ENCODE measurements at regions of chr1 and their contacts with region 1.

Region 1: DNA sequence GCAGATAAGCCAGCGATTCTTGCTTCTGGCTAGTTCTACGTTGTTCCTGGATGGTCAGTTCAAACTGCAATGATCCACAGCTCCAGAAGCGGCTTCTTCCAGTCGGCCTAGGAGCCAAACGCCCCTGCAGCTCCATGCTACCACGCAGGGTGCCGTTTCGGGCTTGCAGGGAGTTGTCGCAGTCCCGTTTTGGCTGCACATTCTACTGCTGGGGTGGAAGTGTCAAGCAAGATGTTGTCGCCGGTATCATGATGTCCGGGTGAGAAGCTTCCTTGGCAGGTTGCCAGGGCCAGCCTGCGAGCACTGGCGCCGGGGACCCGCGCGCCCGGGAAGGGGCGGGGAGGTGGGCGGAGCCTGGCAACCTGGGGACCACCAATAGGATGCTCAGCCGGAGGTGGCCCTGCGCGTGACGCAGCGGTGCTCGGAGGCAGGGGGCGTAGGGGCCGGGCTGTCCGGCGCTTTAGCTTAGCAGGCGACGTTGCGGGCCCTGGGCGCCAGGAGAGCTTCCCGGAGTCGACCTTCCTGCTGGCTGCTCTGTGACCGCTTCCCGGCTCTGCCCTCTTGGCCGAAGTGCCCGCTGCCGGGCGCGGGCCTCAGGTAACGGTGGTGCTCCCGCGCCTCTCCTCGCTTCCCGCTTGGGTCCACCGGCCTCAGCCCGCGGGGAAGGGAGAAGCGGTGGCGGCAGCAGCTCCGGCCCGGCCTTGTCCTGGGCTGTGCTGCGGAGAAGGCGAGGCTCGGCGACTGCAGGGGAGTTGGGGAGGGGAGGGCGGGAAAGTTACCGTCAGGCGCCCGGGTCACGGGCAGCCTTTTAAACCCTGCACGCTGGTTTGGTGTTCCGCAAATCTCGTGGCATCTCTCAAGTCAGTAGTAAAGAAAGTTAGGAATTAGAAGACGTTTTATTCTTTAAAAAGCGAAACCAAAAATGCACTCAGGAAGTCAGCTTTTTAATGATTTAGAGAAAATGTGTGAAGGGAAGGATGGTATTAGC is at the start of gene SOAT1:
- DNase-seq: peak; percentile 95
- H3K4me3 ChIP-seq: peak within 1 kb of the TSS; percentile 66 to 84 (median 71)
- H3K27ac ChIP-seq: peak within 1 kb of the TSS; percentile 92 to 94 (median 93)
- H3K4me1 ChIP-seq: peaks cover 8 to 46% (median 27%) of the 10 kb centered on the region in 4 donors
- H3K27me3 ChIP-seq: no peaks in the 10 kb centered on the region
- CTCF ChIP-seq: peak in 3 of 5 experiments; percentile 11 to 42 (median 36)
- EP300 ChIP-seq: no peak
- POLR2A ChIP-seq: peak; percentile 92
- total RNA-seq, gene SOAT1: 4.0 to 13.9 (median 10.3) TPM

Region 2: GRCh38 chr1:179217943-179218507 is 75.6 kb before region 1 on chr1:
- in situ Hi-C with region 1: no loop called
- intact Hi-C with region 1: no loop called
- DNase-seq: no peak
- H3K4me3 ChIP-seq: no peak overlapping the region
- H3K27ac ChIP-seq: peak overlapping the region; percentile 22 to 59 (median 48)
- H3K4me1 ChIP-seq: peaks cover 0 to 4% (median 2%) of the 10 kb centered on the region in 4 donors
- H3K27me3 ChIP-seq: no peaks in the 10 kb centered on the region
- CTCF ChIP-seq: no peak
- EP300 ChIP-seq: no peak
- POLR2A ChIP-seq: no peak

Region 3: GRCh38 chr1:179229214-179230140 is 64.2 kb before region 1 on chr1 and contains the start of gene ABL2:
- in situ Hi-C with region 1: no loop called
- intact Hi-C with region 1: loop called (anchors 2 kb)
- DNase-seq: peak; percentile 47
- H3K4me3 ChIP-seq: peak within 1 kb of the TSS; percentile 58 to 99 (median 79)
- H3K27ac ChIP-seq: peak within 1 kb of the TSS; percentile 79 to 95 (median 86)
- H3K4me1 ChIP-seq: peaks cover 6 to 43% (median 17%) of the 10 kb centered on the region in 4 donors
- H3K27me3 ChIP-seq: no peaks in the 10 kb centered on the region
- CTCF ChIP-seq: no peak
- EP300 ChIP-seq: no peak
- POLR2A ChIP-seq: no peak
- total RNA-seq, gene ABL2: 9.6 to 51.7 (median 14.3) TPM

Region 4: GRCh38 chr1:179241523-179242097 is 52.0 kb before region 1 on chr1:
- in situ Hi-C with region 1: no loop called
- intact Hi-C with region 1: loop called (anchors 2 kb)
- DNase-seq: no peak
- H3K4me3 ChIP-seq: no peak overlapping the region
- H3K27ac ChIP-seq: no peak overlapping the region
- H3K4me1 ChIP-seq: no peaks in the 10 kb centered on the region
- H3K27me3 ChIP-seq: no peaks in the 10 kb centered on the region
- CTCF ChIP-seq: no peak
- EP300 ChIP-seq: no peak
- POLR2A ChIP-seq: no peak

Region 5: DNA sequence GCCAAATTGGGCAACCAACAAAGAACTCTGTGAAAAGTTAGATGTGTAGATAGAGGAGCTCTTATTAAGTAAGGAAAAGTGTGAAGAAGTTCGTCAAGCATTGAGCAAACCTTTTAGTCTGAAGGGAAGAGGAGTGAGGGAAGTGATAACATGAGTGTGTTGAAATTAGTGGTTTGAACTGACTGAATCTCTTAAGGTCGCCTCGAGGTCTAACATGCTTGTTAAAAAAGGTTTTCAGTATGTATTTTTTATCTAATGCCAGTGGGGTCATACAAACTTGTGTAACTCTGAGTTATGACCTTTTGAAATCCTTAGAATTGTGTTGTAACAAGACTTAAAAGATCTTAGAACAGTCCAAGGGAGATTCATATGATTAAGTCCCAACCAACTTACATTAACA is 34.0 kb after region 1 on chr1:
- in situ Hi-C with region 1: no loop called
- intact Hi-C with region 1: no loop called
- DNase-seq: no peak
- H3K4me3 ChIP-seq: no peak overlapping the region
- H3K27ac ChIP-seq: no peak overlapping the region
- H3K4me1 ChIP-seq: peaks cover 0 to 9% (median 4%) of the 10 kb centered on the region in 4 donors
- H3K27me3 ChIP-seq: no peaks in the 10 kb centered on the region
- CTCF ChIP-seq: no peak
- EP300 ChIP-seq: no peak
- POLR2A ChIP-seq: no peak

Region 6: DNA sequence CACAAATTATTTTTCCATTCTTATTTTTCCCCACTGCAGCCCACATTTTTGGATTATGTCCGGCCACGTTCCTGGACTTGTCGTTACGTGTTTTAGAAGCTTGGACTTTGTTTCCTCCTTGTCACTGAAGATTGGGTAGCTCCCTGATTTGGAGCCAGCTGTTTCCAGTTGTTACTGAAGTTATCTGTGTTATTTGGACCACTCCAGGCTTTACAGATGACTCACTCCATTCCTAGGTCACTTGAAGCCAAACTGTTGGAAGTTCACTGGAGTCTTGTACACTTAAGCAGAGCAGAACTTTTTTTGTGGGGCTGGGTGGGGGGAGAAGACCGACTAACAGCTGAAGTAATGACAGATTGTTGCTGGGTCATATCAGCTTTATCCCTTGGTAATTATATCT is 59.9 kb after region 1 on chr1:
- in situ Hi-C with region 1: no loop called
- intact Hi-C with region 1: no loop called
- DNase-seq: no peak
- H3K4me3 ChIP-seq: no peak overlapping the region
- H3K27ac ChIP-seq: peak overlapping the region in 3 of 4 donors; percentile 32 to 42 (median 39)
- H3K4me1 ChIP-seq: no peaks in the 10 kb centered on the region
- H3K27me3 ChIP-seq: no peaks in the 10 kb centered on the region
- CTCF ChIP-seq: no peak
- EP300 ChIP-seq: no peak
- POLR2A ChIP-seq: no peak

Measured in transverse colon (tissue), 4 donors.